ENCODE measurements at regions of chr1 and their contacts with region 1.

Region 1: DNA sequence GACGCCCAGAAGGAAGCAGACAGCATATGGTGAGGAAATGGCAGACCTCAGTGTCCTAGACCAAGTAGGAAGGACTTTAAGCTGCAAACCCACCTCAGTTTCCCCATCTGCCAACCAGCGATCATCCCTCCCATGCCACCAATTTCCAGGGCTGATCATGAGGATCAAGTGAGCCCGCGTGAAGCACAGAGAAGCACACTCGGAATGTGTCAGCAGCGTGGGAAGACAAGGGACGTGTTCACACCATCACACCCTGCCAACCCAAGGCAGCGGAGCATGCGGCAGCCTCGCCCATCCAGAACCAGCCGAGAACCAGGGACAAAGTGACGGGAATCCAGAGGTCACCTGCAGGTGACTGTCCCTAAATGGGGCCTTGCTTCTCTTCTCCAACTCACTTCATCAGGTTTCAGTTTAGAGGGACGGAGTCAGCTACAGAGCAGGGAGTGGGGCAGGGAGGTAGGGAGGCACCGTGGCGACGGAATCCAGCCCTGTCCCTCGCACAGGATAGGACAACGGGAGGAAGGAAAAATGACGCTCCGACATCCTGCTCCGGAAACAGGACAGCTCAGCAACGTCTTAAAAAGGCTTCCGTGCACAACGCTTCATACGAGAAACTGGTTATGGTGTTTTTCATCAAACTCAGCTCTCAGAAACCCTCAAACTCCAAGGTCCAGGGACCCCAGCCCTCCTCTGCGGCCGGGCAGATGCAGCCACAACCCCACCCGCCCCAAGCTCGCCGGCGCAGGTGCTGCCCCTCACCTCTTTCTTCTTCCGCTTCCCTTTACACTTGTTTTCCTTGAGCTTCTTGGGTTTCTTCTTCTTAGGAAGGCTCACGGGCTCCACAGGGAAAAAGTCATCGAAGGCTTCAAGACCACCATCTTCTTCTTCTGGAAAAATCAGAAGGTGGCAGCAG is 12.5 kb downstream of the CHD5 start:
- DNase-seq: no peak

Region 2: DNA sequence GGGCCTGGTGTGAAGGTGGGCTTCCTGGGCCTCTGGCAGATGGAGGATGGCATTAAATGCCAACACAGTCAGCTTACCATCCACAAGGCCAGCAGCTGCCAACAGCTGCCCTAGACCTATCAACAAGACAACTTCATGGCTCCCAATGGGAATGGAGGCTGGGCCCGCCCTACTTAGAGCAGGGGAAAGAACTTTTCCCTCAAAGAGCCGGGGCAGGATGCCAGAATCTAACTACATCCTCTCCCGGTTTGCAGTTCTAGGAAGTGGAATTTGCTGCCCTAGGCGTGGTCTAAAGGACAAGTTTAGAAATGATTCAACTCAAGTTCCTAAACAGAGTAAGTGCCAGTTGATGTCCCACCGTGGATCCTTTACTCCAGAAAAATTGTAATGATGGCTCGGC is 55.0 kb after region 1 on chr1:
- intact Hi-C with region 1: loop called in 1 of 2 experiments (anchors 1 kb)
- DNase-seq: no peak